Sciatic nerve (tissue), 2 donors: ENCODE measurements at regions of chr11 and their contacts with region 1.

Region 1: DNA sequence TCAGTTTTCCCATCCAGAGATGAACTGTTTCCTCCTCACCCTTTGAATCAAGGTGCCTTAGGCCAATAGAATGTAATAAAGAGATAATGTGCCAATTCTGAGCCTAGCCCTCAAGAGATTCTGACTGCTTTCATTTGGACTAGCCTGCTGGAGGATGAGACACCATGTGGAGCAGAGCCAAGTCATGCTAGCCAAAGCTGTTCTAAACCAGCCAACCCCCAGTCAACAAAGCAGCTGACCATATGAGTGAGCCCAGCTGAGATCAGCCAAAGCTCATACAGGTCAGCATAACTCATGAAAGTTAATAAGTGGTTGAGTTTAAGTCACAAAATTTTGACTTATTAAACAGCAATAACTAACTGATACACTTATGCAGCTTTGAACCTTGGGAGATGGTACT is 66.7 kb upstream of the DBX1 start:
- DNase-seq: no peak
- ATAC-seq: no peak

Region 2: GRCh38 chr11:20177136-20177535 is 49.8 kb before region 1 on chr11:
- intact Hi-C with region 1: loop called (anchors 10 kb)
- DNase-seq: no peak
- ATAC-seq: no peak

Region 3: DNA sequence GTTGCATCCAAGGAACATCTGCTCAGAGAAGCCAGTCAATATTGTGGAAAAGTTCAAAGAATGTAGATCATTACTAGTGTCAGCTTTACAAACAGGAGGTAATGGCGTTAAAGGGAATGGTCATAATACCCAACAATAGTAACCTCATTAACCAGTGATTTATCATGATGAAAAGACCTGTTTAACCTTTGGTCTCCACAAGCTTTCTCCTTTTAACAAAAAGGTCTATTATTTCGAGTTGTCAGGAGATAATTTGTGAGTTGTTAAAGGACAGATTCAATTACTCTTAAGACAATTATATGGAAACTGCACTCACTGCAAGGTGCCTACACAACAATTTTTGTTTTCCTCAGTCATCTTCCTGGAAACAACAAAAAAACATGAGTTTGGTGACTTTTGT is 62.8 kb after region 1 on chr11:
- intact Hi-C with region 1: no loop called
- DNase-seq: no peak
- ATAC-seq: no peak

Region 4: DNA sequence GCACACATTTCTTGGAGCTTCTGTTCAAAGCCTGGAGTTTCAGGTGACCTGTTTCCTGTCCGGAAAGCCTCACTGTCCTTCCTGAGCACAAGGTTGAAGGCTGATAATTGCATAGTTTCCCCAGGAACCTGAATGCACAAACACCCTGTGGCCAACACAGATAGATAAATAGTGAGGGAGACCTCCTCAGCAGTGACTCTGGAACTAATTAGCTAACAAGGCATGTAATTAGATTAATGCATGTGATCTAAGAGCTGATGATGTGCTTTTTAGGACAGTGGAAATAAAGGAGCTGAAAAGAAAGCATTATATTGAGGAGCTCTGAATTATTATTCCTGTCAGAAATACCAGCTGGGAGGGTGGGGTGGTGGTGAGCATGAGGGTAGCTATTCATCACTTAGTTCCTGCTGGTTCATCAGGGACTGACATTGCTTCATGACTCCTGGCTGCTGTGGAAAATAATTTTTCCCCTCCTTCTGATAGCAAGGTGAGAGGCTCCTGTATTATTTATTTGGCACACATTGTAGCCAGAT is 543.5 kb after region 1 on chr11:
- intact Hi-C with region 1: no loop called
- DNase-seq: no peak
- ATAC-seq: no peak